ENCODE measurements at regions of chr5 and their contacts with region 1.

Region 1: GRCh38 chr5:179585941-179586655 is 35.7 kb downstream of the RUFY1 start:
- DNase-seq: no peak
- ATAC-seq: peak; percentile 63
- H3K4me3 ChIP-seq: no peak overlapping the region
- H3K27ac ChIP-seq: no peak overlapping the region
- H3K4me1 ChIP-seq: no peaks in the 10 kb centered on the region
- H3K27me3 ChIP-seq: no peaks in the 10 kb centered on the region
- CTCF ChIP-seq: no peak

Region 2: DNA sequence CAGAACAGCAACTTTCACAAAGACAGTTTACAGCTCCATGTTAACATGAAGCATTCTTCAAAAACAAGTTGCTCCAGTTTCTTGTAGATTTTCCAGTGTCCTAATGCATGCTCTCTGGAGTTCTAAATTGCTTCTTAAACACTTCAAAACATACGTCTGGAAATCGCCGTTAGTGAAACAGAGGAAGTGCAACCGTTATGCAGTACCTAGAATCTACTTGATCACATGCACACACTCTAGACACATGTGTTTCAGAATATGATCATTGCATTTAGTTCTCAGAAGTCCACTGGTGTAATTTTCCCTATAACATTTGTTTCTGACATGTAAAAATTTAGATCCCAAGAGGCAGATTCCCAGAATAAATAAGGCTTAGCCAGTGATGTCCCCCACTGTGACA is 76.9 kb before region 1 on chr5:
- intact Hi-C with region 1: loop called (anchors 10 kb)
- DNase-seq: no peak
- ATAC-seq: no peak
- H3K4me3 ChIP-seq: no peak overlapping the region
- H3K27ac ChIP-seq: no peak overlapping the region
- H3K4me1 ChIP-seq: no peaks in the 10 kb centered on the region
- H3K27me3 ChIP-seq: no peaks in the 10 kb centered on the region
- CTCF ChIP-seq: no peak

Measured in upper lobe of right lung (tissue), 1 donor.